WTC11 (cell line): ENCODE measurements at regions of chr5 and their contacts with region 1.

Region 1: DNA sequence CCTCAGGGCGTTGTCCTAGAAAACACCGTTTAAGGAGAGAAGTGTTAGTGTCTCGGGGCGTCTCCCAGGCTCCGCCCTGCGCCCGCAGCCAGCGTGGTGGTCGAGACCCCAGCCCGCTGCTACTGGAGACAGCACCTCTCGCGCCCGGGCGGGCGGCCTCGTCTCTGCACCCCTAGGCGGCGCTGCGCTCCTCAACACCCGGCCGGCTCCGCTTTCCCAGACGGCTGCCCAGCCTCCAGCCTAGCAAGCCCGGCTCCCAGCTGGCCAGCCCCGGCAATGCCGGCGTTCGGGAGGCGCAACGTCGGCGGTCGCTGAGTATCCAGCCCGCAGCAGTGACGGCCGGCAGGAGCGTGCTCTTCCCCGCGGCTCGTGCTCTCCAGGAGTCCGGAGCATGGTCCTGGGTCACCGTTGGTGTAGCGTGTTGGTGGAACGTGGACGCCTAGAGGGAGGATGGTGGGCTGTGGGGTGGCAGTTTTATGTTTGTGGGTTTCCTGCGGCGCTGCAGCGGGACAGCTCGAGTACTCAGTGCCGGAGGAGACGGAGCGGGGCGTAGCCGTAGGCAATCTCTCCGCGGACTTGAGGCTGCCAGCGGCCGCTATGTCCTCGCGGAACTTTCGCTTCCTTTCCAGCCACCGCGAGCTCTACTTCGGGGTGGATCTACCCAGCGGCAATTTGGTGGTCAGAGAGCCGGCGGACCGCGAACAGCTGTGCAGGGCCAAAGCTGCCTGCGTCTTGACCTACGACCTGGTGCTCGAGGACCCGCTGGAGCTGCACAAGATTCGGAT is 536 bp downstream of the PCDHAC1 start:
- DNase-seq: peak; percentile 98
- ATAC-seq: peak; percentile 86
- H3K4me3 Mint-ChIP-seq: peak overlapping the region; percentile 91
- H3K27ac Mint-ChIP-seq: no peak overlapping the region
- H3K4me1 Mint-ChIP-seq: peaks cover 28% of the 10 kb centered on the region
- H3K27me3 Mint-ChIP-seq: peaks cover 37% of the 10 kb centered on the region
- CTCF ChIP-seq: peak; percentile 87; the same call in 1 of the 2 replicates

Region 2: DNA sequence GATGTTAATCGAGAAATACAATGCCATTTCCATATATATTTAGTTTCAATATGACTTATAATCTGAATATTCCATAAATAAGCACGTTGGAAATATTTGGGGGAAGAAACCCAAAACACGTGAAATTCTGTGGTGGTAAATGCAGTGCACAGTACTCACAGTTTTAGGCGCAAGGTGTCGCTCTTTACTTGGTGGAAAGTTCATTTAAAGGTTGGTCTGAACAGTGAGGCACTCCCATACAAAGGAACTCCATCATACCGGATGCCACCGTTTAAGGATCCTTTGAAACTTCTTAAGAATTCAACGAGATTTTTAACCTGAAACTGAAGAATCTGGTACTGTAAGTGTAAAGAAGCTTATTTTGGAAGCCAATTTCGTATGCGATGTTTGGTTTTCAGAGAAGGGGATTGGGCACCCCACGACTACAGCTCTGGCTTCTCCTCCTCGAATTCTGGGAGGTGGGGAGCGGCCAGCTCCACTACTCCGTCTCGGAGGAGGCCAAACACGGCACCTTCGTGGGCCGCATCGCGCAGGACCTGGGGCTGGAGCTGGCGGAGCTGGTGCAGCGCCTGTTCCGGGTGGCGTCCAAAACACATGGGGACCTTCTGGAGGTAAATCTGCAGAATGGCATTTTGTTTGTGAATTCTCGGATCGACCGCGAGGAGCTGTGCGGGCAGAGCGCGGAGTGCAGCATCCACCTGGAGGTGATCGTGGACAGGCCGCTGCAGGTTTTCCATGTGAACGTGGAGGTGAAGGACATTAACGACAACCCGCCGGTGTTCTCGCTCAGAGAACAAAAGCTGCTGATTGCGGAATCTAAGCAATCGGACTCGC is 57.7 kb before region 1 on chr5 and contains the start of gene PCDHA11:
- CTCF ChIA-PET with region 1: interaction called, 30 read pairs
- POLR2A ChIA-PET with region 1: interaction called, 3 read pairs
- DNase-seq: no peak
- ATAC-seq: peak; percentile 93
- H3K4me3 Mint-ChIP-seq: peak within 1 kb of the TSS; percentile 88
- H3K27ac Mint-ChIP-seq: peak within 1 kb of the TSS; percentile 78
- H3K4me1 Mint-ChIP-seq: peaks cover 16% of the 10 kb centered on the region
- H3K27me3 Mint-ChIP-seq: no peaks in the 10 kb centered on the region
- CTCF ChIP-seq: no peak
- total RNA-seq, gene PCDHA11: 5.8 to 8.7 TPM (median 7.9 TPM) in 3 replicates

Region 3: DNA sequence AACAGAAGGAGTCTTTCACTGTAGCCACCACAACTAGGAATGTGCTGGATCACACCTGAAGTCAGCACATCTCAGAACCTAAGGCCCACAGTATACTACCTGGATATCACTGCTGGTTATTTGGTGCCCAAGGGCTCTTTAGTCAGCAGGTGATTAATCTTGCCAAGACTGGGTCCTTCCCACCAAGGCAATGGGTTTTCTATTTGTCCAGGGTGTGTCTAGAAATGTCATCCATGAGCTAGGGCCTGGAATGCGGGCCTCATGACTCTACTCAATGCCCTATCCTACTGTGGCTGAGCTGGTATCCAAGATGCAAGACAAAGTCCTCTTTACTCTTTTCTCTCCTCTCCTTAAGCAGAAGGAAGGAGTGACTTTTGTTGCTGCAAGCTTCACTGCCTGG is 10.3 kb before region 1 on chr5:
- CTCF ChIA-PET with region 1: interaction called, 12 read pairs
- POLR2A ChIA-PET with region 1: interaction called, 3 read pairs
- DNase-seq: no peak
- ATAC-seq: no peak
- H3K4me3 Mint-ChIP-seq: no peak overlapping the region
- H3K27ac Mint-ChIP-seq: no peak overlapping the region
- H3K4me1 Mint-ChIP-seq: no peaks in the 10 kb centered on the region
- H3K27me3 Mint-ChIP-seq: no peaks in the 10 kb centered on the region; the same call in 1 of the 2 replicates
- CTCF ChIP-seq: no peak

Region 4: GRCh38 chr5:140986117-140986521 is 59.5 kb after region 1 on chr5:
- CTCF ChIA-PET with region 1: interaction called, 18 read pairs
- POLR2A ChIA-PET with region 1: interaction called, 6 read pairs
- DNase-seq: no peak
- ATAC-seq: peak; percentile 89
- H3K4me3 Mint-ChIP-seq: peak overlapping the region; percentile 31
- H3K27ac Mint-ChIP-seq: peak overlapping the region; percentile 98
- H3K4me1 Mint-ChIP-seq: peaks cover 56% of the 10 kb centered on the region
- H3K27me3 Mint-ChIP-seq: no peaks in the 10 kb centered on the region
- CTCF ChIP-seq: no peak

Region 5: DNA sequence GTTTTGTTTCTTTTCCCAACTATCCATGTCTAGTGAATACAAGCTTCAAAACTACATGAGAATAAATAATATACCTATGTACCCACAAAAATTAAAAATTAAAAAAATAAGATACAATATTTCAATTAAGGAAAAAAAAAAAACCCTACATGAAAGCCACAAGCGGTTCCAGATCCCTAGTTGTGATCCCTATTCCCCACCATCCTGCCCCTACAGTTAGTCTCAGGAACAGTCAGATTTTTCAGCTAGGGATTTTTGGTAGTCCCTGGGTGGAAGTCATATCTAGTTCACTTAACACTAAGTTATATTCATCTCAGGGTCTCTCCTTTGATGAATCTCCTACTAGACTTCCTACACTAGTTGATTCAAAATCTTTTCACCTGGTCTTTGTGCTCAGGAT is 106.0 kb after region 1 on chr5:
- CTCF ChIA-PET with region 1: interaction called, 26 read pairs
- POLR2A ChIA-PET with region 1: interaction called, 5 read pairs
- DNase-seq: no peak
- ATAC-seq: peak; percentile 48; the same call in 1 of the 2 replicates
- H3K4me3 Mint-ChIP-seq: no peak overlapping the region
- H3K27ac Mint-ChIP-seq: no peak overlapping the region
- H3K4me1 Mint-ChIP-seq: no peaks in the 10 kb centered on the region; the same call in 1 of the 2 replicates
- H3K27me3 Mint-ChIP-seq: no peaks in the 10 kb centered on the region
- CTCF ChIP-seq: no peak

Region 6: DNA sequence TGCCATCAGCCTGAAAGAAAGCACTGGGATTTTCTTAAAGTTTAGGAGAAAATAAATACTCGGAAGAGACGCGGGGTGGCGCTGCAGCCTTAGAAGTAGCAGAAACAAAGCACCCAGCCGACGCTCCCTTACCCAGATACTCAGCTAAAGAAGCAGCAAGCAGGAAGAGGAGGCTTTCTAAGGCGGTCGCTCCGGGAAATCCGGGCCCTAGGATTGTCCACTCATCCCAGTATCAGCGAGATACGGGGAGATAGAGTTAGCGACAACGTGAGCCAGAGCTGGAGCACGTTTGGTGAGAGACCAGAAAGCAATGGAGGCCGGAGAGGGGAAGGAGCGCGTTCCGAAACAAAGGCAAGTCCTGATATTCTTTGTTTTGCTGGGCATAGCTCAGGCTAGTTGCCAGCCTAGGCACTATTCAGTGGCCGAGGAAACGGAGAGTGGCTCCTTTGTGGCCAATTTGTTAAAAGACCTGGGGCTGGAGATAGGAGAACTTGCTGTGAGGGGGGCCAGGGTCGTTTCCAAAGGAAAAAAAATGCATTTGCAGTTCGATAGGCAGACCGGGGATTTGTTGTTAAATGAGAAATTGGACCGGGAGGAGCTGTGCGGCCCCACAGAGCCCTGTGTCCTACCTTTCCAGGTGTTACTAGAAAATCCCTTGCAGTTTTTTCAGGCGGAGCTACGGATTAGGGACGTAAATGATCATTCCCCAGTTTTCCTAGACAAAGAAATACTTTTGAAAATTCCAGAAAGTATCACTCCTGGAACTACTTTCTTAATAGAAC is 168.0 kb after region 1 on chr5 and contains the start of gene PCDHB2:
- CTCF ChIA-PET with region 1: interaction called, 10 read pairs
- POLR2A ChIA-PET with region 1: no interaction called
- DNase-seq: peak; percentile 83
- ATAC-seq: peak; percentile 94
- H3K4me3 Mint-ChIP-seq: peak within 1 kb of the TSS; percentile 95
- H3K27ac Mint-ChIP-seq: peak within 1 kb of the TSS; percentile 97
- H3K4me1 Mint-ChIP-seq: peaks cover 12% of the 10 kb centered on the region
- H3K27me3 Mint-ChIP-seq: no peaks in the 10 kb centered on the region
- CTCF ChIP-seq: peak; percentile 88
- total RNA-seq, gene PCDHB2: 22.9 to 26.2 TPM (median 23.1 TPM) in 3 replicates